Aorta (tissue), 5 donors: ENCODE measurements at regions of chr1 and their contacts with region 1.

Region 1: GRCh38 chr1:231337472-231338269 is at the start of gene EXOC8:
- DNase-seq: peak; percentile 96 to 99
- ATAC-seq: peak; percentile 97
- H3K4me3 ChIP-seq: peak within 1 kb of the TSS; percentile 78 to 93
- H3K27ac ChIP-seq: peak within 1 kb of the TSS; percentile 73 to 89
- H3K4me1 ChIP-seq: peaks cover 8 to 13% of the 10 kb centered on the region in 2 donors
- H3K27me3 ChIP-seq: no peaks in the 10 kb centered on the region
- total RNA-seq, gene EXOC8: 15.7 to 17.2 TPM

Region 2: DNA sequence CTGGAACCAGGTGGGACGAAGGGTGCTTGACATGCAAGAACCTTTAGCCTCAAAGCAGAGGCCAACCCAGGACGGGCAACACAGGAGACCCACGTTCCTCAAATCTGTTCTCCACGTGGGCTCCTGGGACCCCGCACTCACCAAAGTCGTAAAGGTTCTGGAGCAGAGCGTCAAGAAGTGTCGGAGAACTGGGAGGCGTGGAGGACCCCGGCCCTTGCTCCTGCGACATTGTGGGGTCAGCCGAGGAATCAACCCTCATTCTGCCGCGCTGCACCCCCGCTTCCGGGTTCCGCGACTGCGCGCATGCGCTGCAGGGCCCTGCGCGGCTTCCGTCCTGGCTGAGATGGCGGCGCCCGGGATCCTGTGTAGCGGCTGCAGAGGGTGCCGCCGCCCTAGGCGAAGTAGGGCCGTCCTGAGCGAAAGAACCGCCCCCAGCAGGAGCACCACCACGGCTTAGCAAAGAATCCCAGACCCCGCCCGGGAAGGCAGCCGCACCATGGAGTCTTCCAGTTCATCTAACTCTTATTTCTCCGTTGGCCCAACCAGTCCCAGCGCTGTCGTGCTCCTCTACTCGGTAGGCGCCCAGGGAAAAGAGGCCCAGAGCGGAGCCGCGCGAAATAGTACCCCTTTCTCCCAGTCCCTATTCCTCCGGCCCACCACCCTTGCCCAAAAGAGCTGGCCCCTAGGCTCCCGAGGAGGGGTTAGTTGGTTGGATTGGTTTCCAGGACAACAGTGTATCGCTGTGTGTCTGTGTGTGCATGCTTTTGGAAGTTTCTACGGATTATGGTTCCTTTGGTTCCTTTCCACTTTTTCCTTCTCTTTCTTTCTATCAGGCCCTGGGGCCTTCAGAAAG is 96.6 kb before region 1 on chr1 and contains the start of gene GNPAT:
- intact Hi-C with region 1: loop called in 1 of 2 experiments (anchors 1 kb)
- DNase-seq: peak; percentile 91 to 97
- ATAC-seq: peak; percentile 99
- H3K4me3 ChIP-seq: peak within 1 kb of the TSS; percentile 75 to 98
- H3K27ac ChIP-seq: peak within 1 kb of the TSS in 1 of 2 donors; percentile 49
- H3K4me1 ChIP-seq: peaks cover 2 to 10% of the 10 kb centered on the region in 2 donors
- H3K27me3 ChIP-seq: no peaks in the 10 kb centered on the region
- total RNA-seq, gene GNPAT: 33.5 to 36.6 TPM

Region 3: DNA sequence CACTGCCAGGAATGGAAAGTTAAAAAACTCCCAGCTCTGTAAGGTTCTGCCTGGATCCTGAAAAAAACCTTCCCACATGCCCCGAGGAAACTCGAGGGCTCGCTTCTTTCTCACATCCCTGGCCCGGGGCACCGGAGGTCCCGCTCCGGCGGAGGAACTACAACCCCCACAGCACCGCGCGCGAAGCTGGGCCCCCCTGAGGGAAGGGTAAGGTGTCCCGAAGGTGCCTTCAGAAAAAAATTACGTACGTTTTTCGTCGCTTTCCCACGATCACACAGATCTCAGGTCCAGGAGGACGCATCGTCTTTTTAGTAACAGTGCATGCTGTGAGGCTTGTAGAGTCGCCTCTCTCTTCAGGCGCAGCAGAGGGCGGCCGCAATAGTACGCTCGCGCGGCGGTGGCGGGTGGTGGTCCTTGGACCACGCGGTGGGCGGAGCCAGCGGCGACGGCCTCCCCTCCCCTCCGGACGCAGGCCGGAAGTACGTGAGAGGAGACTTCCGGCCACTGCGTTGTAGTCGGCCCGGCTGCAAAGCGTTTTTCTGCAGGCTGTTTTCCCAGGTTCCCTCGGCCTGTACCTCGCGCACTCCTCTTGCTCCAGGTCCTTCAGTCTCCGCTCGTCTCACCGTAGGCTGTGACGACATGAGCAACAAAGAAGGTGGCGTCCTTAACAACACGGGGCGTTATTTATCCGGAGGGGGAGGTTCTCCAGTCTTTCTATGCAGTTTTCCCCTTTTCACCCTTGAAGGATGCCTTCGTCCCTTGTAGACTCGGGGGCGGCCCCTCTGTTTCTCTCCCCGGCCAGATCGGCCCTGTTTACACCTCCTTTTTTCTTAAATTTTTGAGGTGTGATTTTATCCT is 190.7 kb after region 1 on chr1 and contains the start of gene TSNAX:
- intact Hi-C with region 1: loop called in 1 of 2 experiments (anchors 1 kb)
- DNase-seq: peak; percentile 95 to 97
- ATAC-seq: peak; percentile 100
- H3K4me3 ChIP-seq: peak within 1 kb of the TSS; percentile 71 to 74
- H3K27ac ChIP-seq: peak within 1 kb of the TSS in 1 of 2 donors; percentile 85
- H3K4me1 ChIP-seq: peaks cover 0 to 2% of the 10 kb centered on the region in 2 donors
- H3K27me3 ChIP-seq: no peaks in the 10 kb centered on the region
- total RNA-seq, gene TSNAX: 37.2 to 42.0 TPM

Region 4: GRCh38 chr1:231770506-231771175 is 433.0 kb after region 1 on chr1:
- intact Hi-C with region 1: no loop called
- DNase-seq: no peak
- ATAC-seq: no peak
- H3K4me3 ChIP-seq: no peak overlapping the region
- H3K27ac ChIP-seq: no peak overlapping the region
- H3K4me1 ChIP-seq: no peaks in the 10 kb centered on the region
- H3K27me3 ChIP-seq: no peaks in the 10 kb centered on the region

Region 5: DNA sequence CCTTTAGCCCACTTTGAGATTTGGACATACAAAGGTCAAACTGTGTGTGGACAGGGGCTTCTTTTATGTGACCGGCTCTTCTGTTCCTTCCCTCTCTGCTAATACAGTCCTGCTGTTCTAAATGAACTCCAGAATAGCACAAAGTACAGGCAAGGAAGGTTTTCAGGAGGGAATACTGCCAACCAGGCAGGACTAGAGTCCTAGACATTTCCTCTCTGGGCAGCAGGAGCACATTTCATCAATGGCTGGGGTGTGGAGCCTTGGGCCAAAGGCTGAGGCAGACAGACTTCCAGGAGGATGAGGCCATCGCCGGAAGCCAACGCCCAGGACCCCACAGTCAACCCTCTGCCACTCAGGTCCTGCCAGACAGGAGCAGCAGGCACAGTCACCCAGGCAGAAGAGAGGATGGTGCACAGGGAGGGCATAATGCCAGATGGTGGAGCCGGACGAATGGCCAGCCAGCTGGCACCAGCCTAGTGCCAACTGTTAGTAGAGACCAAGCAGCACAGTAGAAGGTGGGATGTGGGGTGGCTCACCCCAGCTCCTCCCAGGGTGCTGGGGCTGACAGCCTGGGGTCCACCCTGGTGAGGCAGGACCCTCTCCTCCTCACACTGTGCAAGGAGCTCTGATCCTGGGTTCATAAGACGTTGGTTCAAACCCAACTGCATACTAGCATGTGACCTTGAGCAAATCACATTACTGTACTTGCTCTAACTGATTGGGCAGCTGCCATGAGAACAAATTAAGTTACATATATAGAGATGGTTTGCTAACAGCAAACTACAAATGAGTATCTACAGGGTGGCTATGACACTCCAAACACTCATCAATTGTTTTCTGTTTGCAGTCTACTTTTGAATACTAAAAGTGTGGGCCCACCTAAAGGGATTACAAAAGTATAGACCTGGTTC is 881.5 kb after region 1 on chr1:
- intact Hi-C with region 1: no loop called
- DNase-seq: no peak
- ATAC-seq: no peak
- H3K4me3 ChIP-seq: no peak overlapping the region
- H3K27ac ChIP-seq: no peak overlapping the region
- H3K4me1 ChIP-seq: no peaks in the 10 kb centered on the region
- H3K27me3 ChIP-seq: no peaks in the 10 kb centered on the region